A549 (cell line): ENCODE measurements at regions of chr19 and their contacts with region 1.

Region 1: DNA sequence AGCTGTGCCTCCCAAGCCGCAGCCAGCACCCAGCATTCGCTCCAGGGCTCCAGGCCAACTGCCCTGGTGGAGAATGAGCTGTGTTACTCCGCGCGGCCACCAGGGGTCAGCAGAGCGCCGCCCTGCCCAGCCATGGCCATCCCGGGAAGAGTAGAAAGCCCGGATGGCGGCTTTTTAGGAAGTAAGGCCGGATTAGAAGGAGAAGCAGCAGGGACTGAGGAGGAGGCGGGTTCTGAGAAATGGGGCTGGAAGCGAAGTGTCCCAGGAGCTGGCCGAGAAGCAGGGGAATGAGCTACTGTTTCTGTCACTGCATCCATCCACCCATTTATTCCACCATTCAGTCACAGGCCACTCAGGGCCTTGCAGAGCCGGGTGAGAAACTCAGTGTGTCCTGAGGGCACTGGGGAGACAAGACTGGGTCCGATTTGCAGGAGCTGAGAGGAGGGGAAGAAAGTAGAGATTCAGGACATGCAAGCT is 6.6 kb upstream of the NPAS1 start:
- DNase-seq: peak in 1 of 2 experiments; percentile 83
- ATAC-seq: peak; percentile 94 to 96
- H3K4me3 ChIP-seq: no peak overlapping the region
- H3K27ac ChIP-seq: peak overlapping the region; percentile 47 to 76
- H3K4me1 ChIP-seq: peaks cover 4% of the 10 kb centered on the region; the same call in 1 of the 3 replicates
- CTCF ChIP-seq: peak; percentile 95
- EP300 ChIP-seq: no peak
- POLR2A ChIP-seq: no peak
- RAD21 ChIP-seq: peak; percentile 98

Region 2: GRCh38 chr19:46866387-46867152 is 146.5 kb before region 1 on chr19:
- CTCF ChIA-PET with region 1: interaction called, 11 read pairs
- POLR2A ChIA-PET with region 1: no interaction called
- DNase-seq: peak; percentile 58 to 62
- ATAC-seq: peak in 1 of 2 experiments; percentile 60; a peak in 3 of 6 replicates
- H3K4me3 ChIP-seq: peak overlapping the region; percentile 4; the same call in 1 of the 3 replicates
- H3K27ac ChIP-seq: peak overlapping the region; percentile 62 to 81
- H3K4me1 ChIP-seq: peaks cover 76% of the 10 kb centered on the region
- CTCF ChIP-seq: no peak
- EP300 ChIP-seq: peak in 1 of 2 experiments; percentile 37; a peak in 1 of 5 replicates
- POLR2A ChIP-seq: no peak
- RAD21 ChIP-seq: no peak

Region 3: GRCh38 chr19:47035127-47036096 is 22.3 kb after region 1 on chr19:
- CTCF ChIA-PET with region 1: interaction called, 127 read pairs
- POLR2A ChIA-PET with region 1: no interaction called
- DNase-seq: peak; percentile 92 to 99
- ATAC-seq: peak; percentile 81 to 89
- H3K4me3 ChIP-seq: peak overlapping the region; percentile 52
- H3K27ac ChIP-seq: peak overlapping the region; percentile 89
- H3K4me1 ChIP-seq: peaks cover 17% of the 10 kb centered on the region
- CTCF ChIP-seq: peak; percentile 81
- EP300 ChIP-seq: no peak
- POLR2A ChIP-seq: peak; percentile 36
- RAD21 ChIP-seq: peak; percentile 64 to 78

Region 4: DNA sequence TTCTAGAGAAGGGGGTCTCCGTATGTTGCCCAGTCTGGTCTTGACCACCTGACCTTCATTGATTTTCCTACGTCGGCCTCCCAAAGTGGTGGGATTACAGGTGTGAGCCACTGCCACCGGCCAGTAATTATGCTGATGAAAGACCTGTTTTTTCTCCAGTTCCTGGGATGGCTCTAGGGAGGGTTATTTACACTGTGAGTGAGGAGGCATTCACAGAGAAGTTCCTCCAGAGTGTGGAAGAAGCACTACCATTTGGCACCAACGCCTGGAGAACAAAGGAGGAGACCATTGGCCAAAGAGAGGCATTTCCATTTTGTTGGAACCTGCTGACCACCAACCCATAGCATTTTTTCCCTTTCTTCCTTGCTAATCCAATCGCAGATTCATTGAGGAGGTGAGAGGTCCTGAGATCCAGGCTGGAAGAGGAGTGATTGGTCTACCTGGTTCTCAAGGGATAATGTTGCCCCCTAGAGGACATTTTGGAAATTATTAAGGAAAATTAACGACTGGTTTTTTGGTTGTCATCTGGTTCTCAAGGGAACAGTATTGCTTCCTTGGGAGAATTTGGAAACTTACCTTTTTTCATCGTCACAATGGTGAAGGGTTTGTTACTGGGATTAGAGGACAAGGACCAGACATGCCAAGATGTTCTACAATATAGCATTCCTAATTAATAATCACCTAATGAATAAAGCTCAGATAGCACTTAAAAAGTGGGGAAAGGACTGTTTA is 112.0 kb after region 1 on chr19:
- CTCF ChIA-PET with region 1: interaction called, 128 read pairs
- POLR2A ChIA-PET with region 1: interaction called, 4 read pairs
- DNase-seq: peak; percentile 86 to 90
- ATAC-seq: peak; percentile 84 to 85
- H3K4me3 ChIP-seq: no peak overlapping the region
- H3K27ac ChIP-seq: peak overlapping the region in 1 of 2 experiments; percentile 51; a peak in 3 of 6 replicates
- H3K4me1 ChIP-seq: peaks cover 33% of the 10 kb centered on the region
- CTCF ChIP-seq: peak; percentile 95
- EP300 ChIP-seq: no peak
- POLR2A ChIP-seq: no peak
- RAD21 ChIP-seq: peak; percentile 91 to 95

Region 5: GRCh38 chr19:47168065-47168464 is 155.0 kb after region 1 on chr19:
- CTCF ChIA-PET with region 1: interaction called, 12 read pairs
- POLR2A ChIA-PET with region 1: no interaction called
- DNase-seq: no peak
- ATAC-seq: no peak
- H3K4me3 ChIP-seq: no peak overlapping the region
- H3K27ac ChIP-seq: no peak overlapping the region
- H3K4me1 ChIP-seq: no peaks in the 10 kb centered on the region
- CTCF ChIP-seq: no peak
- EP300 ChIP-seq: no peak
- POLR2A ChIP-seq: no peak
- RAD21 ChIP-seq: no peak